Posterior cingulate gyrus (tissue), 11 donors: ENCODE measurements at regions of chr2 and their contacts with region 1.

Region 1: DNA sequence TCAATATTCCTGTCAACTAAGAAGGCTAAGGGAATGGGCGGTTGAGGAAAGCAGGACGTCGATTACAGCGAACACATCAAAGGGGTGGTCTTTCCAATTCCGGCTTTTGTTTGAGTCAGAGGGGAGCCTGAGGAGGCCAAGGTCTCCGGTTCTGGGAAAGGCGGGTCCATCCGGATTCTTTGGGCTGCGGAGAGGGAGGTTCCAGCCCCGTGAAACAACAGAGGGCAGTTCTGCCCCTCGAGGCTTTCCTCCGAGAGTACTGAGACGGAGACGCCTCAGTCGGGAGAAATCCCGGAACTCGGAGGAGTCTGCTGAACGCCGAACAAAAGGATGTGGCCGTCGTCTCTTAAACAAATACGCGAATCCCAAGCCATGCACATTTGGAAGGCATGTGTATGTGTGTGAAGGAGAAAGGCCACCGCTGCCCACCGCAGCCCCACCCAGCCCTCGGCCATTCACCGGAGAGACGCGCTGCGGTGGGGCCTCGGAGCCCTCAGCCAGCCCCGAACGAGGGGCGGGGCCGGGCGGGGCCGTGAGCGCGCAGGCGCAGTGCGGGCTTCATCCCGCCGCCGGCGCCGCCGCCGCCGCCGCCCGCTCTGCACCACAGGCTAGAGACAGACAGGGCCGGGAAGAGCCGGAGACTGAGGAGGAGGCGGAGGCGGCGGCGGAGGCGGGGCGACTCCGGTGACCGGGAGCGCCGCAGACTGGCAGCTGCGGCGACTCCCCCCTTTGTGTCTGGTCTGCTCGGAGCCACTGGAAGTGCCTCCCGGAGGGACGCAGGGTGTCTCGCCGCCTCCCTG is at the start of gene BMPR2:
- DNase-seq: peak; percentile 72 to 98 (median 82)

Region 2: GRCh38 chr2:201780674-201781581 is 594.9 kb before region 1 on chr2 and contains the start of gene ALS2:
- intact Hi-C with region 1: loop called (anchors 5 kb)
- DNase-seq: peak; percentile 88 to 99 (median 95)

Region 3: GRCh38 chr2:202278944-202279343 is 96.9 kb before region 1 on chr2:
- intact Hi-C with region 1: loop called (anchors 10 kb)
- DNase-seq: no peak

Region 4: DNA sequence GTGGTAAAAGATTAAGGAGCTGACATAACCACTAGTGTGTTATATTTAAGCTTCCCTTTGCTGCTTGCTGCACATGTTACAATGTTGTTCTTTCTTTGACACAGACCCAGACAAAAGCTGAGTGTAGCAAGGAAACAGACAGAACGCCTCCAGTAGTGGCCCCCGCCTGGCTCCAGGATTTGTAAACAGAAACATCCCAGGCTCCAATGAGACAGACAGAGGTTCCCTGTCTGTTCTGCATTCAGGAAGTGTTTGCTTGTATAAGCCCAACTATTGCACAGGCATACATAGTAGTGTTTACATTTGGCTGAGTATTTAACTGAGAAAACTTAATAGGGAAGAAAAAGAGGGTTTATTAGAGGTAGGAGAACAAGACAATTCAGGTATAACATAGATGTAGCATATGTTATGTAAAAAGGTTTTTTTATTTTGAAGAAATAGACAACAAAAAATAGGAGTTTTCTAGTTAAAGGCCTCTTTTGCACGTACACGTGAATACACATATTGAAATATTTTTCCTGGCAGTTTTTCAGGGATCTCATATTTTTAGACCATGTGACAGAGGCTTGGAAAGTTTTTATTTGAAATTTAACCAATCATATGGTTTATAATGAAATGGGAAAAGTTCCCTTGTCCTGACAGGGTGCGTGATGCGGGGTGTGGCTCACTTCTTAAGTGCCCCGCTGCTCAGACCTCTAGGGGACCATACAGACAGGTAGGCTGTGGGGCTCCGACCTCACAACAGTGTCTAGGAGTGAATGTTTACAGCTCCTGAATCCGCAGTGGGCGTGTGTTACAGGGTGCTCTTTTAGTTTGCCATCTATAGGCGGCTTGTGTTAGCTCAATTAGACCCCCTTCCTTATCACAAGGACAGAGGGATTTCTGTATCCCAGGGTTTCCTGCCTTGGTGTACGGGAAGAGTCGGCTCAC is 118.8 kb after region 1 on chr2:
- intact Hi-C with region 1: loop called (anchors 5 kb)
- DNase-seq: peak in 9 of 10 donors; percentile 28 to 91 (median 52)

Region 5: GRCh38 chr2:202634556-202635427 is 259.0 kb after region 1 on chr2 and contains the start of gene FAM117B:
- intact Hi-C with region 1: loop called (anchors 10 kb)
- DNase-seq: peak; percentile 93 to 100 (median 98)

Region 6: GRCh38 chr2:202660796-202661195 is 285.0 kb after region 1 on chr2:
- intact Hi-C with region 1: no loop called
- DNase-seq: no peak

Region 7: GRCh38 chr2:202911512-202912341 is 535.9 kb after region 1 on chr2 and contains the starts of genes CARF and WDR12:
- intact Hi-C with region 1: loop called (anchors 5 kb)
- DNase-seq: peak; percentile 88 to 98 (median 92)